ENCODE measurements at regions of chr18 and their contacts with region 1.

Region 1: GRCh38 chr18:24176727-24177416 is 38.0 kb downstream of the CABYR start:
- DNase-seq: peak; percentile 27
- H3K4me3 ChIP-seq: no peak overlapping the region
- H3K27ac ChIP-seq: no peak overlapping the region
- H3K4me1 ChIP-seq: peaks cover 9% of the 10 kb centered on the region
- H3K27me3 ChIP-seq: no peaks in the 10 kb centered on the region
- CTCF ChIP-seq: peak; percentile 62 to 91

Region 2: GRCh38 chr18:24126155-24126961 is 50.5 kb before region 1 on chr18:
- CTCF ChIA-PET with region 1: no interaction called
- dilution Hi-C with region 1: no loop called
- in situ Hi-C with region 1: no loop called
- intact Hi-C with region 1: no loop called
- DNase-seq: no peak
- H3K4me3 ChIP-seq: no peak overlapping the region
- H3K27ac ChIP-seq: no peak overlapping the region
- H3K4me1 ChIP-seq: no peaks in the 10 kb centered on the region
- H3K27me3 ChIP-seq: no peaks in the 10 kb centered on the region
- CTCF ChIP-seq: no peak

Region 3: DNA sequence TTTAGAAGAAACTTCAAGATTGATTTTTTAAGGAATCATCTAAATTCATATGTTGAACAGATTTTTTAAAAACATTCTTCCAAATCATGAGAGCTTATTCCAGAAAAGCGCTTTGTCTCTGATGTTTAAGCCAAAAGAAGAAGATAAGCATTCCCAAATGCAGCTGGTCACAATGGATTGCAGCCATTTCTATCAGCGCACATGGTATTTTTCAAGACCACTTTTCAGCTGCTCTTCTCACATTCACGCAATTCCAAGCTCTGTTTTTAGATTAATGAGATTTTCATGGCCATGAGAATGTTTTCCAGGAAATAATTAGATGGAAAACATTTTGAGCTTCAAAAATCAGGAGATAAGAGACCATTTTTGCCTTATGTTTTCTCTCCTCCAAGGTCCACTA is 212.1 kb after region 1 on chr18:
- CTCF ChIA-PET with region 1: interaction called, 11 read pairs
- dilution Hi-C with region 1: no loop called
- in situ Hi-C with region 1: no loop called
- intact Hi-C with region 1: no loop called
- DNase-seq: no peak
- H3K4me3 ChIP-seq: no peak overlapping the region
- H3K27ac ChIP-seq: no peak overlapping the region
- H3K4me1 ChIP-seq: no peaks in the 10 kb centered on the region
- H3K27me3 ChIP-seq: no peaks in the 10 kb centered on the region
- CTCF ChIP-seq: no peak

Measured in mammary epithelial cell (primary cell).